Upper lobe of right lung (tissue), 1 donor: ENCODE measurements at regions of chr2 and their contacts with region 1.

Region 1: DNA sequence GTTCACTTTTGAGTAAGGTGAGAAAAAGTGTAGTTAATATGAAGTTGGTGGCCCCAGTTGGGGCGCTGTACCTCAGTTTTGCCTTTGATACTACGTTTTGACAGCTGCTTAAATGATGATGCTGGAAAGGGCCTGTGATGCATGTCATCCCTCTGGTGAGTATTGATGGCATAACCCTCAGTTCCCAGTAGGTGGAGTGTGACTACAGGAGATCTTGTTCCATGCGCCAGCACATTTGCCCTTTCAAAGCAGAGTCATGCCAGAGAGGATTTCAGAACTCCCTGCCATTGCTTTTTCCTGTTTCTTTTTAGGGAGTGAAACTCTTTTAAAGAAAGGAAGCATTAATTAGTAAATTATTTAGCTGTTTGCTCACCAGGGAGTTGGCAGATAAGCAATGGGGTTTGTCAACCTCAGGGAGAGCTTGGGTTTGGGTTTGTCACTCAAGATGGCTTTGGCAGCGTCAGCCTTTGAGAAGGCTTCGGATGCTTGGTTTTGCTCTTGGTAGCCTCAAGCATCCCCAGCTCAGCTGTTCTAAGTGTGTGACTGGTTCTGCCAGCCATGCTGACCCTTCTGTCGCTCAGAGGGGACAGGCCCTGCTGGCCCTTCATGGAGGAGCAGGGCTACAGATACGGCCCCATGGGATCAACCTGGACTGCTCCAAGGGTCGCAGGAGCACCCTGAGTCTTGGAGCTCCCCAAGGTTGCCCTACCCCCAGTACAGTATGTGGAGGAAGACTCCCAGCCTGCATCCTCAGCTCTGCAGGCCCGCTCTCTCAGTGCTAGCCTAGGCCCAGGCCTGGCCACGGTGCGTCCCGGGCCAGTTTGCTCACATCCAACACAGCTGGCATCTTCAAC is 29.1 kb downstream of the ARMC9 start:
- DNase-seq: no peak
- ATAC-seq: peak; percentile 99
- H3K4me3 ChIP-seq: no peak overlapping the region
- H3K27ac ChIP-seq: peak overlapping the region; percentile 45
- H3K4me1 ChIP-seq: peaks cover 10% of the 10 kb centered on the region
- H3K27me3 ChIP-seq: no peaks in the 10 kb centered on the region
- CTCF ChIP-seq: peak; percentile 80

Region 2: DNA sequence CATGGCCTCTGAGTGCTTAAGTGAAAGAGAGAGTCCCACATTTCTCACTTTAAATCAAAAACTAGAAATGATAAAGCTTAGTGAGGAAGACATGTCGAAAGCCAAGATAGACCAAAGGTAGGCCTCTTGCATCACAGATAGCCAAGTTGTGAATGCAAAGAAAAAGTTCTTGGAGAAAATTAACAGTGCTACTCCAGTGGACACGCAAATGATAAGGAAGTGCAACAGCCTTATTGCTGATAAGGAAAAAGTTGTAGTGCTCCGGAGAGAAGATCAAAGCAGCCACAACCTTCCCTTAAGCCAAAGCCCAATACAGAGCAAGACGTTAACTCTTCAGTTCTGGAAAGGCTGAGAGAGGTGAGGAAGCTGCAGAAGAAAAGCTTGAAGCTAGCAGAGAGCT is 138.8 kb before region 1 on chr2:
- intact Hi-C with region 1: no loop called
- DNase-seq: no peak
- ATAC-seq: no peak
- H3K4me3 ChIP-seq: no peak overlapping the region
- H3K27ac ChIP-seq: no peak overlapping the region
- H3K4me1 ChIP-seq: no peaks in the 10 kb centered on the region
- H3K27me3 ChIP-seq: no peaks in the 10 kb centered on the region
- CTCF ChIP-seq: no peak

Region 3: DNA sequence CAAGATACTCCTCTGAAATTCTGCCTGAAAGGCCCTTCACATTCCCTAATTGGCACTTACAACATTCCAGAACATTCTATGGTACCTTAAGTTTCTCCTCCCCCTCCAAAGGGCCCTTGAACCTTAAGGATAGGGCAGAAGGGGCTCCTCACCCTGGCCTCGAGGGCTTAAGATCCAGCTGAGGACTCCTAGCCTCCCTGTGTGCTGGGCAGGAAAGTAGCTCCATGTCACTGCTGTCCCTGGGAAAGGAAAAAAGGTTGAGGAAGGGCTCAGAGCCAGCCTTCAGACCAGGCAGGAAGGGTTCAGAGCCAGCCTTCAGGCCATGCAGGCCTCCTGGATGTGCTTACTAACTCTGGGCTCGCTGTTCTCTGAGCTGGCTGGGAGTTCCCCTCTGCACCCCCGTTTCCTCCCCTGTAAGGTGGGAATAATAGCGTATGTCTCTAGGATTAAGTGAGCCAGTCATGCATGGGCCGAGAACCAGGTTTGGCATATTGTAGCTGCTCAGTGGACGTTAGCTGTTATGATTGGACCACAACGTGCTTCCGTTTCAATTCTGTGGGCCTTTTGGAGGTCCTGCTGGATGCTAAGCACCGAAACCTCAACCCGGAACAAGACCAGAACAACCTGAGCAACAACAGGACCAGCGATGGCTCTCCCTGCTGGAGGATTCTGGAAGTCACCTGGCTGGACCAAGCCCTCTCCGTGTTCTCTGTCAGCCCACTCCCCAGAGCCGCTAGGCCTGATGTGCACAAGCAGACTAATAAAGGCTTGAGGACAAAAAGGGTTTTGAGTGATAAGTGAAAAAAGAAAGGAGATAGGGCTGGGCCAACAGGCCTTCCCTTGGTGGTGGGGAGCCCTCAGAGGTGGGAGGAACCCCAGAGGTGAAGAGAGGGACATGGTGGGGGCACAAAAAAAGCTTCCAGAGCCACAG is 166.9 kb after region 1 on chr2:
- intact Hi-C with region 1: loop called (anchors 10 kb)
- DNase-seq: no peak
- ATAC-seq: peak; percentile 58
- H3K4me3 ChIP-seq: peak overlapping the region; percentile 56
- H3K27ac ChIP-seq: peak overlapping the region; percentile 77
- H3K4me1 ChIP-seq: peaks cover 18% of the 10 kb centered on the region
- H3K27me3 ChIP-seq: peaks cover 5% of the 10 kb centered on the region
- CTCF ChIP-seq: peak; percentile 26

Region 4: GRCh38 chr2:231411831-231412617 is 184.5 kb after region 1 on chr2:
- intact Hi-C with region 1: loop called (anchors 5 kb)
- DNase-seq: peak; percentile 94
- ATAC-seq: peak; percentile 99
- H3K4me3 ChIP-seq: peak overlapping the region; percentile 62
- H3K27ac ChIP-seq: peak overlapping the region; percentile 63
- H3K4me1 ChIP-seq: peaks cover 4% of the 10 kb centered on the region
- H3K27me3 ChIP-seq: no peaks in the 10 kb centered on the region
- CTCF ChIP-seq: peak; percentile 87

Region 5: DNA sequence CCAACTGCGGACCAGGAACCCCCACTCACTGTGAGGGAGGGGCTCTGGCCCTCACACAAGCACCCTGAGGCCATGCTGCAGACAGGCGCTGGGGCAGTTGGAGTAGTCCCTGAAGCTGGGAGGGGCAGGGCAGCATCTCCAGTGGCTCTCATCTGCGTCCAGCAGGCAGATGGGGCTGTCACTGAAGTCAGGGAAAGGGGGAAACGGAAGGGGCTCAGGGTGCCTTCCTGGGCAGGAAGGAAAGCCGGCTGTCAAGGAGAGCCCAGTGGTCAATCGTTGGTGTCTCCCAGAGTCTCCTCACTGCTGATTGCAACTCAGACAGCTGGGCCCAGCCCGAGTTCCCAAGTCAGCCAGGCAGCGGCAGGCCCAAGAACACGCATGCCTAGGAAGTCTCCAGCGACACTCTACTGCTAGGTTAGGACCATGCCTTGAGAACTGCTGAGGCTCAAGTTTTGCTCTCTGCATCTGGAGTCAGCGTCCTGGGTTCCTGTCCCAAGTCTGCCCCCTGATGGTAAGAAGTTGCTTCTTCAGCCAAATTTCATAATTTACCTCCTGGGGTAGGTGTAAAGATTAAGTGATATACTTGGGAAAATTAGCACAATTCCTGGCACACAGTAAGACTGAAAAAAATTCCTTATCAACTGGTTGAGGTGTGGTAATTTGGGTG is 330.2 kb after region 1 on chr2:
- intact Hi-C with region 1: no loop called
- DNase-seq: peak; percentile 74
- ATAC-seq: peak; percentile 96
- H3K4me3 ChIP-seq: no peak overlapping the region
- H3K27ac ChIP-seq: peak overlapping the region; percentile 58
- H3K4me1 ChIP-seq: peaks cover 21% of the 10 kb centered on the region
- H3K27me3 ChIP-seq: no peaks in the 10 kb centered on the region
- CTCF ChIP-seq: peak; percentile 79